Activated T-helper 1 cell treated with anti-CD3 and anti-CD28 coated beads, Interleukin-12 subunit alpha, Interleukin-12 subunit beta, Interleukin-2, Interleukin-4 antibody, amounts not matched to agents 30 ng/mL and 10 ng/mL and 1 ng/mL, durations not matched to agents 14 hours and 24 hours and 36 hours (primary cell): ENCODE measurements at regions of chr9 and their contacts with region 1.

Region 1: DNA sequence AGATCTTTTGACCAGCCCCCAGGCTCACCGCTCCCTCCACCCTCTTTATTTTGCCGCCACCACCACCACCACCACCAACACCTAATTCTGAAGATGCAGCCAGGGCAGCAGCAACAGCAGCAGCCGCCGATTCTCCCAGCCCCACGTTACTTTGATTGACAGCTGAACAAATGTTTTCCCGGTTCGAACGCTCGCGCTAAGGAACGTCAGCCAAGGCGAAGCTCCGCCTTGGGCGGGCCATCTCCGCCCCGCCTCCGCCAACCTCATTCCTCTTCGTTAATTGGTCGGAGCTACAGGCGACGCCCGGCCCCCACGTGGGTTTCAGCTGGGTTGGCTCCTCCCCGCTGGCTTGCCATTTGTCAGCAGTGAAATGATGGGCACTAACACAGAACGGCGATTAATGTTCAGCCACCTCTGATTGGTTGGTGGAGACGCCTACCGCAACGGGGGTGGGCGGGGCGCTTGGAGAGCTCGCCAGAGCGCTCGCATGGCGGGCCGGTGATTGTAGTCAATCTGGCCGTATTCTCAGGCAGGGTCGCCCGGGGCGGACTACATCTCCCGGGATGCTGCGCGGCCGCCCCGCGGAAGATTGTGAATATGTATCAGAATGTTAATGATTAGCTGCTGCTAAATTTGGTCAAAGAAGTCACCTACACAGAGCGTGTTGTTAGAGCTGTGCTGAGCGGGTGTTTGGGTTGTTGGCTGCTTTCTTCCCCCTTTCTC is at the start of gene TLE4:
- DNase-seq: peak; percentile 100
- H3K4me3 Mint-ChIP-seq: peak within 1 kb of the TSS; percentile 70
- H3K27ac Mint-ChIP-seq: no peak within 1 kb of the TSS
- H3K4me1 Mint-ChIP-seq: peaks cover 36% of the 10 kb centered on the region
- H3K27me3 Mint-ChIP-seq: peaks cover 16% of the 10 kb centered on the region
- total RNA-seq, gene TLE4: 25.1 and 25.4 TPM in 2 replicates

Region 2: GRCh38 chr9:78296893-78297671 is 1274.4 kb before region 1 on chr9 and contains the start of gene PSAT1:
- intact Hi-C with region 1: loop called (anchors 1 kb)
- DNase-seq: peak; percentile 92
- H3K4me3 Mint-ChIP-seq: peak within 1 kb of the TSS; percentile 91
- H3K27ac Mint-ChIP-seq: peak within 1 kb of the TSS; percentile 91
- H3K4me1 Mint-ChIP-seq: peaks cover 61% of the 10 kb centered on the region
- H3K27me3 Mint-ChIP-seq: no peaks in the 10 kb centered on the region
- total RNA-seq, gene PSAT1: 85.7 and 91.8 TPM in 2 replicates

Region 3: GRCh38 chr9:79583952-79584654 is 12.6 kb after region 1 on chr9:
- intact Hi-C with region 1: loop called (anchors 1 kb)
- DNase-seq: no peak
- H3K4me3 Mint-ChIP-seq: no peak overlapping the region
- H3K27ac Mint-ChIP-seq: no peak overlapping the region
- H3K4me1 Mint-ChIP-seq: peaks cover 50% of the 10 kb centered on the region
- H3K27me3 Mint-ChIP-seq: no peaks in the 10 kb centered on the region

Region 4: GRCh38 chr9:79623799-79624721 is 52.6 kb after region 1 on chr9:
- intact Hi-C with region 1: loop called (anchors 1 kb)
- DNase-seq: peak; percentile 4
- H3K4me3 Mint-ChIP-seq: peak overlapping the region; percentile 62
- H3K27ac Mint-ChIP-seq: peak overlapping the region; percentile 78
- H3K4me1 Mint-ChIP-seq: peaks cover 31% of the 10 kb centered on the region
- H3K27me3 Mint-ChIP-seq: no peaks in the 10 kb centered on the region

Region 5: DNA sequence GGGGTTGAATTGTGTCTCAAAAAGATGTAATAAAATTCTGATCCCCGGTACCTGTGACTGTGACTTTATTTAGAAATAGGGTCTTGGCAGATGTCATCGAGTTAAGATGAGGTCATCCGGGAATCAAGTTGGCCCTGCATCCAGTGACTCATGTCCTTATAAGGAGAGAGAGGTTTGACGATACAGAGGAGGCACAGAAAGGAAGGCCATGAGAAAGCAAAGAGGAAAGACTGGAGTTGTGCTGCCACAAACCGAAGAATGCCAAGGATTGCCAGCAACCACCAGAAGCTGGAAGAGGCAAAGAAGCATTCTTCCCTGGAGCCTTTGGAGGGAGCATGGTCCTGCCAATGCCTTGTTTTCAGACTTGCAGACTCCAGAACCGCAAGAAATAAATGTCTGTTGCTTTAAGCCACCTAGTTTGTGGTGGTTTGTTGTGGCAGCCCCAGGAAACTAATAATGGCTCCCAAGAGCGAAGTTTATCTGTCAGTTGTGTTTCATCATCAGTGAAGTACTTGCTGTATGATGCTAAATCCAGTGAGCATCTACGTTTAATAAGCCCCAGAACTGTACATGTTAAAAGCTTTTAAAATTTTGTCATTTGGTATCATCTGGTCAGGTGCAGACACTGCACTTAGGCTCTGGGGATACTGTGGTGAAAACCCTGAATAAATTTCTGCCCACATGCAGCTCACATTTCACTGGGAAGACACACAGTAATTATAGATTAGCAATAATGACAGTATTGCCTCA is 115.1 kb after region 1 on chr9:
- intact Hi-C with region 1: loop called (anchors 2 kb)
- DNase-seq: no peak
- H3K4me3 Mint-ChIP-seq: no peak overlapping the region
- H3K27ac Mint-ChIP-seq: peak overlapping the region; percentile 68
- H3K4me1 Mint-ChIP-seq: peaks cover 19% of the 10 kb centered on the region
- H3K27me3 Mint-ChIP-seq: no peaks in the 10 kb centered on the region

Region 6: GRCh38 chr9:79883073-79883645 is 311.7 kb after region 1 on chr9:
- intact Hi-C with region 1: loop called (anchors 10 kb)
- DNase-seq: no peak
- H3K4me3 Mint-ChIP-seq: no peak overlapping the region
- H3K27ac Mint-ChIP-seq: no peak overlapping the region
- H3K4me1 Mint-ChIP-seq: peaks cover 42% of the 10 kb centered on the region
- H3K27me3 Mint-ChIP-seq: peaks cover 1% of the 10 kb centered on the region